PC-3 (cell line): ENCODE measurements at regions of chr7 and their contacts with region 1.

Region 1: GRCh38 chr7:20647908-20648776 is 32.7 kb downstream of the ABCB5 start:
- DNase-seq: peak; percentile 70
- ATAC-seq: peak; percentile 95
- H3K4me3 ChIP-seq: no peak overlapping the region
- H3K27ac ChIP-seq: no peak overlapping the region
- H3K4me1 ChIP-seq: no peaks in the 10 kb centered on the region
- H3K27me3 ChIP-seq: peaks cover 10% of the 10 kb centered on the region
- CTCF ChIP-seq: peak; percentile 81

Region 2: DNA sequence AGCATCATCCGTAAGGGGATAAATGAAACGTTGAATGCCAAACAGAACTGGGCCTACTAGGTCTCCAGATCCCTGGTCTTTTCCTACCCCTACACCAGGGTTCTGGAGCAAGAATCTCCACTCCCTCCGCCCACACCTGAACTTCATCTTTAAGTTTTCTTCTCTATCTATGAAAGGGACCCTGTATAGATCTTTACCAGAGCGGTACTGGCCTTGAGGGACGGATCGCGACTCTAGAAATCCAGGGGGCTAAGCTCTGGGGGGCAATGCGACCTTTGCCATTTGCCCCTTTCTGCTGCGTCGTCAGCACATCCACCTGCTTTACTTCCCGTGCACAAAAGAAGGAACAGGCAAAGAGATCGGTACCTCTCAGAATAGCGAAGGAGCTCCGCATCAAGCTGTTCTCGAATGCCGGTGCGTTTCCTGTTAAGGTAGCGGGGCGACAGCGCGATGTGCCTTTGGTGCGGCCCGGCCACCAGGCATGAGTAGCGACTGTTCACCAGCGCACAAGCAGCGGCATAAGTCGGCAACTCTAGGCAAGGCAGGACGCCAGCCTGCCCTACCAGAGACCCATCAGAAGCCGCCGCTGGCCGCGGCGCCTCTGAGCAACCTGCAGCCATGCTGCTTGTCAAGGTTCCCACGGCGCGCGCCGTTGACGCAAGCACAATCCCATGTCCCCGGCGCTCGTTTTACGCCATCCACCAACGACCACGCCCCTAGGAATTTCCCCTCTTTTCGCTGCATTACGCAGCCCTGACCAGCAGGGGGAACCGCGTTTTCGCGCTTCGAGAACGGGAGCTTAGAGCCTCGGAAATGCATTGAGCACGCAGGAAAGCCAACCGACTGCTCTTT is 939.5 kb before region 1 on chr7 and contains the start of gene POLR1F:
- CTCF ChIA-PET with region 1: interaction called, 11 read pairs
- POLR2A ChIA-PET with region 1: no interaction called
- intact Hi-C with region 1: loop called (anchors 1 kb)
- DNase-seq: peak; percentile 98
- ATAC-seq: peak; percentile 90
- H3K4me3 ChIP-seq: peak within 1 kb of the TSS; percentile 98
- H3K27ac ChIP-seq: peak within 1 kb of the TSS; percentile 8; the same call in 1 of the 2 replicates
- H3K4me1 ChIP-seq: peaks cover 24% of the 10 kb centered on the region
- H3K27me3 ChIP-seq: no peaks in the 10 kb centered on the region
- CTCF ChIP-seq: peak; percentile 82
- total RNA-seq, gene POLR1F: 19.8 and 22.3 TPM in 2 replicates

Region 3: GRCh38 chr7:19728716-19729115 is 919.4 kb before region 1 on chr7:
- CTCF ChIA-PET with region 1: interaction called, 3 read pairs
- POLR2A ChIA-PET with region 1: no interaction called
- intact Hi-C with region 1: loop called (anchors 5 kb)
- DNase-seq: no peak
- ATAC-seq: no peak
- H3K4me3 ChIP-seq: no peak overlapping the region
- H3K27ac ChIP-seq: no peak overlapping the region
- H3K4me1 ChIP-seq: no peaks in the 10 kb centered on the region
- H3K27me3 ChIP-seq: no peaks in the 10 kb centered on the region
- CTCF ChIP-seq: no peak

Region 4: GRCh38 chr7:20539201-20539600 is 108.9 kb before region 1 on chr7:
- CTCF ChIA-PET with region 1: no interaction called
- POLR2A ChIA-PET with region 1: no interaction called
- intact Hi-C with region 1: loop called (anchors 2 kb)
- DNase-seq: peak; percentile 68
- ATAC-seq: peak; percentile 74; the same call in 1 of the 2 replicates
- H3K4me3 ChIP-seq: no peak overlapping the region
- H3K27ac ChIP-seq: no peak overlapping the region
- H3K4me1 ChIP-seq: peaks cover 9% of the 10 kb centered on the region; the same call in 1 of the 2 replicates
- H3K27me3 ChIP-seq: no peaks in the 10 kb centered on the region
- CTCF ChIP-seq: peak; percentile 72

Region 5: DNA sequence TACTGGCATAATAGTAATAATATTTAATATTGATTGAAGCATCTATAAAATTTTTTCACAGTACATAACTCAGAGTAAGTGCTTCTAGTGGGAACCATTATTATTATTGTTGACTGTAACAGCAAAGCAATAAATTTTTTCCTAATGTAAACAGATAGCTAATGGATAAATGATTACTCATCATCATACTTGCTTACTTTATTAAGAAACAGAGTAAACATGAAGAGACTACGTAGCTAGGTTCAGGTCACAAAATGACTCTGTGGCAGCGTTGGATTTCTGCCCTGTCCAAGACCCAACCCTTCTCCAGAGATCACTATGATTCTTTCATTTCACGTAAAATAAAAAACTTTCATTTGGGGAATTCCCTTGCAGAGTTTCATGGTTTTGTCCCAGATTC is 40.9 kb before region 1 on chr7:
- CTCF ChIA-PET with region 1: interaction called, 4 read pairs
- POLR2A ChIA-PET with region 1: no interaction called
- intact Hi-C with region 1: loop called (anchors 2 kb)
- DNase-seq: peak; percentile 77
- ATAC-seq: peak; percentile 99
- H3K4me3 ChIP-seq: no peak overlapping the region
- H3K27ac ChIP-seq: peak overlapping the region; percentile 85
- H3K4me1 ChIP-seq: peaks cover 3% of the 10 kb centered on the region
- H3K27me3 ChIP-seq: no peaks in the 10 kb centered on the region
- CTCF ChIP-seq: no peak

Region 6: GRCh38 chr7:20816372-20816959 is 168.3 kb after region 1 on chr7:
- CTCF ChIA-PET with region 1: no interaction called
- POLR2A ChIA-PET with region 1: no interaction called
- intact Hi-C with region 1: no loop called
- DNase-seq: no peak
- ATAC-seq: no peak
- H3K4me3 ChIP-seq: no peak overlapping the region
- H3K27ac ChIP-seq: no peak overlapping the region
- H3K4me1 ChIP-seq: no peaks in the 10 kb centered on the region
- H3K27me3 ChIP-seq: no peaks in the 10 kb centered on the region
- CTCF ChIP-seq: no peak

Region 7: GRCh38 chr7:21054427-21055112 is 406.4 kb after region 1 on chr7:
- CTCF ChIA-PET with region 1: no interaction called
- POLR2A ChIA-PET with region 1: no interaction called
- intact Hi-C with region 1: no loop called
- DNase-seq: peak; percentile 19
- ATAC-seq: no peak
- H3K4me3 ChIP-seq: no peak overlapping the region
- H3K27ac ChIP-seq: no peak overlapping the region
- H3K4me1 ChIP-seq: no peaks in the 10 kb centered on the region
- H3K27me3 ChIP-seq: no peaks in the 10 kb centered on the region
- CTCF ChIP-seq: no peak